ENCODE measurements at regions of chr17 and their contacts with region 1.

Region 1: DNA sequence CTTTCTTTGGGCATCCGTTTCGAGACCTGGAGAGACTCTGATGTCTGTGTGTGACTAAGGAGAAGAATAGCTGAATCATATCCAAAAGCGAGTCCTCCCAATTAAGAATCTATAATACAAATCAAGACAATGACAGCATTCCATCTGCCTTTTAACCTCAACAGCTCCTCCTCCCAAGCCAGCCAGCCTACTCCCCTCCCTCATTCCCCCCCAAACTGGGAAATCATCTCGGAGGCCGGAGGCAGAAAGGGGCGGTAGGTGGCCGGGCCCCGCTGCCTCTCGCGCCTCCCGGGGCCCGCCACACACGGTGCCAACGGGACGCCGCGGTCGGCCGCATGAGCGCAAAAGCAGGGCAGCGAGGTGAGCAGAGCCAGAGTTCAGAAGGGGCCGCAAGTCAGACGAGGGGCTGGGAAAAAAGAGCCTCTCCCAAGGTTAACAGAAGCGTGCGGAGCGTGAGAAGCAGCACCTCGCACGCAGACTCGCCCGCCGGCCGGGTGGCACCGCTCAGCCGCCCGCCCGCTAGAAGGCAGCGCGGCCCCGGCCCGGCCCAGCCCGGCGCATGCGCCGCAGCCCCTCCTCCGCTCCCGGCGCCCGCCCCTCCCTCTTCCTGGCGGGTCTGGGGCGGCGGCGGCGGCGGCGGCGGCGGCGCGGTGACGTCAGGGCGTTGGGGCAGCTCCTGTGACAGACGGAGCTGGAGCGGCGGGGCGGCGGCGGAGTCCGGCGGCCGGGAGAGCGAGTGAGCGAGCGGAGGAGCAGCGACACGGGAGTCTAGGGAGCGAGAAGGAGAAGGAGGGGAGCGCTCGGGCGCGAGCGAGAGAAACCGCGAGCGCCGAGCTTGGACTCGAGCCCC is at the start of gene PAFAH1B1:
- DNase-seq: peak; percentile 90
- H3K4me3 ChIP-seq: peak within 1 kb of the TSS; percentile 95 to 100 (median 98)
- H3K27ac ChIP-seq: peak within 1 kb of the TSS; percentile 96
- H3K4me1 ChIP-seq: peaks cover 22% of the 10 kb centered on the region
- H3K27me3 ChIP-seq: no peaks in the 10 kb centered on the region
- CTCF ChIP-seq: no peak
- POLR2A ChIP-seq: peak; percentile 88
- total RNA-seq, gene PAFAH1B1: 153 and 158 TPM in 2 replicates

Region 2: GRCh38 chr17:2672026-2672425 is 78.8 kb after region 1 on chr17:
- CTCF ChIA-PET with region 1: interaction called, 7 read pairs
- POLR2A ChIA-PET with region 1: no interaction called
- dilution Hi-C with region 1: no loop called
- intact Hi-C with region 1: loop called (anchors 2 kb)
- DNase-seq: no peak
- H3K4me3 ChIP-seq: no peak overlapping the region
- H3K27ac ChIP-seq: no peak overlapping the region
- H3K4me1 ChIP-seq: no peaks in the 10 kb centered on the region
- H3K27me3 ChIP-seq: no peaks in the 10 kb centered on the region
- CTCF ChIP-seq: no peak
- POLR2A ChIP-seq: no peak

Measured in endothelial cell of umbilical vein (primary cell).